Sigmoid colon (tissue), 7 donors: ENCODE measurements at regions of chr2 and their contacts with region 1.

Region 1: GRCh38 chr2:237512774-237513466 is 25.9 kb downstream of the MLPH start:
- DNase-seq: peak; percentile 92
- H3K4me3 ChIP-seq: no peak overlapping the region
- H3K27ac ChIP-seq: no peak overlapping the region
- H3K4me1 ChIP-seq: peaks cover 0 to 17% (median 12%) of the 10 kb centered on the region in 4 donors
- H3K27me3 ChIP-seq: no peaks in the 10 kb centered on the region
- CTCF ChIP-seq: peak; percentile 88 to 89 (median 89)
- EP300 ChIP-seq: no peak
- POLR2A ChIP-seq: no peak

Region 2: GRCh38 chr2:237421542-237422116 is 91.3 kb before region 1 on chr2:
- intact Hi-C with region 1: no loop called
- DNase-seq: peak; percentile 94
- H3K4me3 ChIP-seq: peak overlapping the region in 3 of 4 donors; percentile 19 to 29 (median 26)
- H3K27ac ChIP-seq: peak overlapping the region; percentile 67 to 78 (median 73)
- H3K4me1 ChIP-seq: peaks cover 0 to 19% (median 14%) of the 10 kb centered on the region in 4 donors
- H3K27me3 ChIP-seq: no peaks in the 10 kb centered on the region
- CTCF ChIP-seq: peak; percentile 63 to 84 (median 76)
- EP300 ChIP-seq: peak in 1 of 4 donors; percentile 11
- POLR2A ChIP-seq: no peak

Region 3: GRCh38 chr2:237561221-237561620 is 48.3 kb after region 1 on chr2:
- intact Hi-C with region 1: loop called (anchors 2 kb)
- DNase-seq: no peak
- H3K4me3 ChIP-seq: no peak overlapping the region
- H3K27ac ChIP-seq: no peak overlapping the region
- H3K4me1 ChIP-seq: peaks cover 0 to 20% (median 15%) of the 10 kb centered on the region in 4 donors
- H3K27me3 ChIP-seq: peaks cover 0 to 15% (median 11%) of the 10 kb centered on the region in 3 donors
- CTCF ChIP-seq: no peak
- EP300 ChIP-seq: no peak
- POLR2A ChIP-seq: no peak

Region 4: GRCh38 chr2:237662671-237663093 is 149.8 kb after region 1 on chr2:
- intact Hi-C with region 1: no loop called
- DNase-seq: peak; percentile 98
- H3K4me3 ChIP-seq: peak overlapping the region in 2 of 4 donors; percentile 16 to 23
- H3K27ac ChIP-seq: peak overlapping the region; percentile 62 to 83 (median 75)
- H3K4me1 ChIP-seq: peaks cover 0 to 37% (median 26%) of the 10 kb centered on the region in 4 donors
- H3K27me3 ChIP-seq: no peaks in the 10 kb centered on the region
- CTCF ChIP-seq: no peak
- EP300 ChIP-seq: peak in 3 of 4 donors; percentile 2 to 34 (median 11)
- POLR2A ChIP-seq: no peak